ENCODE measurements at regions of chr15 and their contacts with region 1.

Region 1: DNA sequence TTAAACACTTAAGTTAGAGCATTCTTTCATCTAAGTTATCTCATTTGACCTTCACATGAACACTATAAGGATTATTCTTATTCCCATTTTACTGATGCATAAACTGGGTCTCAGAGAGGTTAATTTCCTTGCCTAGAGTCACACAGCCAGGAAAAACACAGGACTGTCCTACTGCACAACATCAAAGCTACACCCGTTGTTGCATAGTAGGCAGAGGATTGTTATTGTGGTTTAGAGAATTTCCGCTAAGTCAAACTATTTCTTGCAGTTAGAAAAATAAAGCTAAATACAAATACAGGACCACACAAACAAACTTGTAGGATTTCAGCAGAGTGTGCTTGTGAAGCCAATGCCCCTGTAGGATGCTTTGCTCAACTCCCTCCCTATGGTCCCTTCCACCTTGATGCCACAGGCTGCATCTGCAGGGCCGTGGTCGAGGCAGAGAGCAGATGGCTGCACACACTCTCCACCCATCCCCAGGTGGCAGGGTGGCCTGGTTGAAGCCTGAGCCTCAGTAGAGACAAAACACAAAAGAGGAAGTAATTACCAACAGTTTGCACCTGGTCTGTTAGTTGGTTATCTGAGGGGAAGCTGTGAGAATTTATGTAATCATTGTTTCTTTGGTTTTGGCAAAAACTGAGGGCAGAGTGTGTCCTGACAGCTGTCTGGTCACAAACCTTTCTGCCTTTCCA is 41.1 kb upstream of the SKOR1 start:
- DNase-seq: no peak
- ATAC-seq: no peak
- H3K4me3 Mint-ChIP-seq: no peak overlapping the region
- H3K27ac Mint-ChIP-seq: no peak overlapping the region
- H3K4me1 Mint-ChIP-seq: peaks cover 28% of the 10 kb centered on the region
- H3K27me3 Mint-ChIP-seq: no peaks in the 10 kb centered on the region

Region 2: GRCh38 chr15:67322481-67322880 is 461.8 kb before region 1 on chr15:
- CTCF ChIA-PET with region 1: no interaction called
- POLR2A ChIA-PET with region 1: no interaction called
- intact Hi-C with region 1: no loop called
- DNase-seq: no peak
- ATAC-seq: no peak
- H3K4me3 Mint-ChIP-seq: no peak overlapping the region
- H3K27ac Mint-ChIP-seq: no peak overlapping the region
- H3K4me1 Mint-ChIP-seq: no peaks in the 10 kb centered on the region
- H3K27me3 Mint-ChIP-seq: peaks cover 8% of the 10 kb centered on the region

Region 3: GRCh38 chr15:67762610-67763368 is 21.4 kb before region 1 on chr15:
- CTCF ChIA-PET with region 1: no interaction called
- POLR2A ChIA-PET with region 1: no interaction called
- intact Hi-C with region 1: no loop called
- DNase-seq: peak; percentile 81
- ATAC-seq: peak; percentile 99
- H3K4me3 Mint-ChIP-seq: no peak overlapping the region
- H3K27ac Mint-ChIP-seq: peak overlapping the region; percentile 79
- H3K4me1 Mint-ChIP-seq: peaks cover 76% of the 10 kb centered on the region
- H3K27me3 Mint-ChIP-seq: no peaks in the 10 kb centered on the region

Region 4: GRCh38 chr15:67820992-67821783 is 37.0 kb after region 1 on chr15:
- CTCF ChIA-PET with region 1: interaction called, 4 read pairs
- POLR2A ChIA-PET with region 1: no interaction called
- intact Hi-C with region 1: loop called in 1 of 2 experiments (anchors 5 kb)
- DNase-seq: peak; percentile 69
- ATAC-seq: peak; percentile 54
- H3K4me3 Mint-ChIP-seq: no peak overlapping the region
- H3K27ac Mint-ChIP-seq: no peak overlapping the region
- H3K4me1 Mint-ChIP-seq: peaks cover 33% of the 10 kb centered on the region
- H3K27me3 Mint-ChIP-seq: peaks cover 79% of the 10 kb centered on the region

Measured in activated CD4-positive, alpha-beta T cell treated with anti-CD3 and anti-CD28 coated beads for 36 hours (primary cell).